CD4-positive, alpha-beta T cell (primary cell): ENCODE measurements at regions of chr1 and their contacts with region 1.

Region 1: DNA sequence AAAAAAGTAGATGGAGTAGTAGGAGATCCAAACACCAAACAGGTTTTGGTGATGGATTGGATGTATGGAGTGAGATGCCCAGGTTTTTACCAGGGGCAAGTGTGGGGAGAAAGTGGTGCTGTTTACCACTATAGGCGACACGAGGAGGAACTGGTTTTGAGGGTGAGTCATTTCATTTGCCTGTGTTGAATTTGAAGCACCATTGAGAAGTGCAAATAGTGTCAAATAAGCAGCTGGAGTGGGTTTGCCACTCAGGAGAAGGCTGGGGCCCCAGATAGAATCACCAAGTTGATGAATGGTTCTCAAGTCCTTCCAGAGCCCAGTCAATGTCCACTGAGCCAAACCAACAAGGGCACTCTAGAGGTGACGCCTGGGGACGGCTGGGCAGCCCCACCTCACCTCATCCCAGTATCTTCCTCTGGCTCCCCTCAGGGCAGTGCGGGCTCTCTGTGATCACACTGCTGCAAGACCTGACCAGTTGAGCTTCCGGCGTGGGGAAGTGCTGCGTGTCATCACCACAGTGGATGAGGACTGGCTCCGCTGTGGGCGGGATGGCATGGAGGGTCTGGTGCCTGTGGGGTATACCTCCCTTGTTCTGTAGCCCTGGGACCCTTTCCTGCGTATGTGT is 9.4 kb downstream of the RUSC1 start:
- DNase-seq: no peak
- ATAC-seq: no peak
- H3K4me3 ChIP-seq: no peak overlapping the region
- H3K4me3 Mint-ChIP-seq: no peak overlapping the region
- H3K27ac ChIP-seq: no peak overlapping the region
- H3K27ac Mint-ChIP-seq: no peak overlapping the region
- H3K4me1 ChIP-seq: peaks cover 6% of the 10 kb centered on the region
- H3K4me1 Mint-ChIP-seq: peaks cover 13% of the 10 kb centered on the region
- H3K27me3 ChIP-seq: no peaks in the 10 kb centered on the region
- H3K27me3 Mint-ChIP-seq: no peaks in the 10 kb centered on the region
- CTCF ChIP-seq: no peak

Region 2: GRCh38 chr1:155729031-155729898 is 399.2 kb after region 1 on chr1:
- CTCF ChIA-PET with region 1: no interaction called
- POLR2A ChIA-PET with region 1: no interaction called
- intact Hi-C with region 1: loop called in 1 of 2 experiments (anchors 10 kb)
- DNase-seq: peak in 10 of 14 experiments; percentile 7 to 63 (median 23)
- ATAC-seq: peak; percentile 78
- H3K4me3 ChIP-seq: no peak overlapping the region
- H3K4me3 Mint-ChIP-seq: no peak overlapping the region
- H3K27ac ChIP-seq: no peak overlapping the region
- H3K27ac Mint-ChIP-seq: peak overlapping the region; percentile 28
- H3K4me1 ChIP-seq: no peaks in the 10 kb centered on the region
- H3K4me1 Mint-ChIP-seq: no peaks in the 10 kb centered on the region
- H3K27me3 ChIP-seq: no peaks in the 10 kb centered on the region
- H3K27me3 Mint-ChIP-seq: no peaks in the 10 kb centered on the region
- CTCF ChIP-seq: peak; percentile 56